Esophagus squamous epithelium (tissue), 5 donors: ENCODE measurements at regions of chr13 and their contacts with region 1.

Region 1: GRCh38 chr13:29508130-29508875 is 87.2 kb downstream of the SLC7A1 start:
- DNase-seq: no peak
- H3K4me3 ChIP-seq: no peak overlapping the region
- H3K27ac ChIP-seq: no peak overlapping the region
- H3K4me1 ChIP-seq: peaks cover 0 to 61% (median 15%) of the 10 kb centered on the region in 3 donors
- H3K27me3 ChIP-seq: peaks cover 0 to 43% (median 2%) of the 10 kb centered on the region in 4 donors
- CTCF ChIP-seq: peak; percentile 90 to 99 (median 94)
- POLR2A ChIP-seq: no peak

Region 2: DNA sequence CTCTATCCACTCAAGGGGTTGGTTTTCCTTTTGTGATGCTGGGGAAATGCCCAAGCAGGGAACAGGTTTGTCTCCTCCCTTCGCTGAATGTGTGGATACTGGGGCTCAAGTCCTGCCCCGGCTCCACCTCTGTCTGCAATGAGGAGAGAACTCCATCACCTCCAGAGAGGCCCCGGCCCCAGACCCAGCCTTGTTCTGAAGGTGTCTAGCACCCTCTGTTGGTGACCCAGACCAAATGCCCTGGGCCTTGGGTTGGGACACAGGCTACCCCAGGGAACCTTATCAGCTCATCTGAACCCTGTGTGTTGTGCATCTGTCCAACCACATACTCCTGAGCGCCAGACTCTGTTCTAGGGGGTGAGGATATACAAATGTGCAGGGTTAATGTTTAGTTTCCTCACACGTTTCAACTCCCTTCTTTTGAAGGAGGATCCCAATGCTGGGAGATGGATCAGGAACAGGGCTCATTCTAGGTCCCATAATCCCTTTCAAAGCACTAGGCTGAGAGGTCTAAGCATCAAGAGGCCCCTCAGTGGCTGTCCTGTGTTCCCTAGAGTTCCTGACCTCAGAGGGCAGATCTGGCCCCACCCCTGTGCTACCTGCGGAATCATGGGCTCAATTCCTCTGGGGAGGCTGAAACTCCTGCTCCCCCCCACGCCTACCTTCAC is 199.7 kb after region 1 on chr13:
- intact Hi-C with region 1: loop called (anchors 5 kb)
- DNase-seq: no peak
- H3K4me3 ChIP-seq: no peak overlapping the region
- H3K27ac ChIP-seq: no peak overlapping the region
- H3K4me1 ChIP-seq: peaks cover 6 to 61% (median 13%) of the 10 kb centered on the region in 3 donors
- H3K27me3 ChIP-seq: peaks cover 0 to 10% (median 0%) of the 10 kb centered on the region in 4 donors
- CTCF ChIP-seq: peak; percentile 22 to 83 (median 64)
- POLR2A ChIP-seq: no peak